MCF 10A (cell line): ENCODE measurements at regions of chr1 and their contacts with region 1.

Region 1: DNA sequence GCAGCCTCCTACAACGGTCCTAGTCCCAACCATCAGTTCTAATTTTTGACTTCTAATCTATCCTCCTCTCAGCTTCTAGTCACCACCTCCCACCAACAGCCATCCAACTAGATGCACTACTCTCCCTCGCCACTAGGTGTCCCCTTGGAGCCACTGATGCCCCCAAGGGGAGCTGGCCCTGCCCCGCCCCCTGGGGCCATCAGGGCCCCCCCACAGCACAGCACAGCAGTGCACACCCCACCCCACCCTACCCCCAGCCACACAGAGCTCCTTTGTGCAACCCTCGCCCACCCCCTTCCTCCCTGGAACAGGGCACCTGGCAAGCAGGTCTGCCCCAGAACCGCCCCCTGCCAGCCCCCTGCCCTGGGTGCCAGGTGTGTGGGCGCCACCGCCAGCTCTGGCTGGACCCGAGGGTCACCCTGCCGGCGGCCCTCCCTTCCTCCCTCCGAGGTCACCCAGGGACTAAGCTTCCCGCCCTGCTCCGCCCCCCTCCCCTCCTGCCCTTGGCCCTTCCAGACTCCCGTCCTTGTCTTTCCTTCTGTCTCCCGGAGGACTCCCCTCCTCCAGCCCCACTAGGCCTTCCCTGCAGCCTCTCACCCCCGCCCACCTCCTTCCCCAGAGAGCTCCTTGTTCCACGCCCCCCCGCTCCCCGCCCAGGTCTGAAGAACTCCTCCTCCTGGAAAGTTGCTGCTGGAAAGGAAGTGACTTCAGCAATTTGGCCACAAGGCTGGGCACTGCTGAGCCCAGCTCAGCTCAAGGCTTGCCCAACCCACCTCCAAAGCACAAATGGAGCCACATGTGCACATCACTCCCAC is 47.0 kb downstream of the AHDC1 start:
- DNase-seq: peak; percentile 97
- H3K4me3 Mint-ChIP-seq: peak overlapping the region; percentile 44
- H3K27ac Mint-ChIP-seq: peak overlapping the region; percentile 44
- H3K4me1 Mint-ChIP-seq: peaks cover 36% of the 10 kb centered on the region
- H3K27me3 Mint-ChIP-seq: no peaks in the 10 kb centered on the region
- CTCF ChIP-seq: peak; percentile 96

Region 2: GRCh38 chr1:27517907-27518718 is 38.9 kb before region 1 on chr1:
- CTCF ChIA-PET with region 1: interaction called, 15 read pairs
- POLR2A ChIA-PET with region 1: interaction called, 5 read pairs
- intact Hi-C with region 1: loop called (anchors 2 kb)
- DNase-seq: peak; percentile 74
- H3K4me3 Mint-ChIP-seq: no peak overlapping the region
- H3K27ac Mint-ChIP-seq: peak overlapping the region; percentile 39
- H3K4me1 Mint-ChIP-seq: peaks cover 43% of the 10 kb centered on the region
- H3K27me3 Mint-ChIP-seq: no peaks in the 10 kb centered on the region
- CTCF ChIP-seq: no peak

Region 3: DNA sequence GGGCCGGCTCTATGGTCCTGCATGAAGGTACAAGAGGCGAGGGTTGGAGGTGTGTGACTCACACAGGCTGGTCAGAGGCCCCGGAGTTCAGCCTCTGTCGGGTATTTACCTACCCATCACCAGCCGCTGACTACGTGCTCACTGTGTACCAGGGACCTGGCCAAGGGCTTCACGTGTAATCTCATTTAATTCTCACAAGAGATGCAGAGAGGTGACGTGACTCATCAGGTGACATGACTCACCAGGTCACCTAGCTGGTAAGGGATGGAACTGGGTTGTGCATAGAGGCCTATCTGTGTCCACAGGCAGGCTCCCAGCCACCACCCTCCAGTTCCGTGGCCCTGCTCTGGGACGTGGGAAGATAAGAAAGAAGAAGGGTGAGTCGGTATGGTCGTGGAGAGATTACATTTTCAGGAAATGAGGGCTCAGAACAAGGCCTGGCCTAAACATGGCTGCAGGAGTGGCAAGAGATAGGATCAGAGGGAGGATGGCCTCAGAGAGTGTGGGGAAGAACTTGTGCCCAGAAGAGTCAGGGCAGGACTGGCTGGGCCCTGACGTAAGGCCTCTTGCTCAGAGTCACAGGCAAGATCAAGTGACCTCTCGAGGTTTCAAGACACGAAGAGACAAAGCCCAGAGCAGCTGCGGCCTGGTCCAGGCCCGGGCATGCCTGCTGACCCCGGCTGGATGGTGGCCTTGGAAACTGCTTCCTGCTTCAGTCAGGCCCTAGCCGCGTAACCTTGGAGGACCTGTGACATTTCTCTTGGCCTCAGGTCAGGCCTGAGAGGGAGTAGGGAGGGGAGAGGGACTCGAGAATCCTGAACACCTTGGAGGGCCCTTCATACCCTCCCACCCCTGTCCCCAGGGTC is 14.3 kb before region 1 on chr1:
- CTCF ChIA-PET with region 1: interaction called, 36 read pairs
- POLR2A ChIA-PET with region 1: interaction called, 28 read pairs
- intact Hi-C with region 1: no loop called
- DNase-seq: peak; percentile 86
- H3K4me3 Mint-ChIP-seq: peak overlapping the region; percentile 3
- H3K27ac Mint-ChIP-seq: peak overlapping the region; percentile 87
- H3K4me1 Mint-ChIP-seq: peaks cover 43% of the 10 kb centered on the region
- H3K27me3 Mint-ChIP-seq: no peaks in the 10 kb centered on the region
- CTCF ChIP-seq: no peak

Region 4: GRCh38 chr1:27574871-27575831 is 18.2 kb after region 1 on chr1:
- CTCF ChIA-PET with region 1: interaction called, 28 read pairs
- POLR2A ChIA-PET with region 1: interaction called, 53 read pairs
- intact Hi-C with region 1: no loop called
- DNase-seq: peak; percentile 71
- H3K4me3 Mint-ChIP-seq: peak overlapping the region; percentile 53
- H3K27ac Mint-ChIP-seq: no peak overlapping the region
- H3K4me1 Mint-ChIP-seq: peaks cover 38% of the 10 kb centered on the region
- H3K27me3 Mint-ChIP-seq: no peaks in the 10 kb centered on the region
- CTCF ChIP-seq: peak; percentile 19

Region 5: GRCh38 chr1:27589841-27590426 is 32.9 kb after region 1 on chr1:
- CTCF ChIA-PET with region 1: interaction called, 28 read pairs
- POLR2A ChIA-PET with region 1: interaction called, 5 read pairs
- intact Hi-C with region 1: no loop called
- DNase-seq: peak; percentile 28
- H3K4me3 Mint-ChIP-seq: no peak overlapping the region
- H3K27ac Mint-ChIP-seq: no peak overlapping the region
- H3K4me1 Mint-ChIP-seq: peaks cover 10% of the 10 kb centered on the region
- H3K27me3 Mint-ChIP-seq: no peaks in the 10 kb centered on the region
- CTCF ChIP-seq: no peak